ENCODE measurements at regions of chr3 and their contacts with region 1.

Region 1: GRCh38 chr3:43223670-43224364 is 62.5 kb upstream of the SNRK start:
- DNase-seq: no peak
- H3K4me3 ChIP-seq: no peak overlapping the region
- H3K4me3 Mint-ChIP-seq: no peak overlapping the region
- H3K27ac Mint-ChIP-seq: no peak overlapping the region
- H3K4me1 ChIP-seq: no peaks in the 10 kb centered on the region
- H3K4me1 Mint-ChIP-seq: no peaks in the 10 kb centered on the region
- H3K27me3 ChIP-seq: no peaks in the 10 kb centered on the region; the same call in 1 of the 2 replicates
- H3K27me3 Mint-ChIP-seq: peaks cover 2% of the 10 kb centered on the region
- CTCF ChIP-seq: no peak

Region 2: DNA sequence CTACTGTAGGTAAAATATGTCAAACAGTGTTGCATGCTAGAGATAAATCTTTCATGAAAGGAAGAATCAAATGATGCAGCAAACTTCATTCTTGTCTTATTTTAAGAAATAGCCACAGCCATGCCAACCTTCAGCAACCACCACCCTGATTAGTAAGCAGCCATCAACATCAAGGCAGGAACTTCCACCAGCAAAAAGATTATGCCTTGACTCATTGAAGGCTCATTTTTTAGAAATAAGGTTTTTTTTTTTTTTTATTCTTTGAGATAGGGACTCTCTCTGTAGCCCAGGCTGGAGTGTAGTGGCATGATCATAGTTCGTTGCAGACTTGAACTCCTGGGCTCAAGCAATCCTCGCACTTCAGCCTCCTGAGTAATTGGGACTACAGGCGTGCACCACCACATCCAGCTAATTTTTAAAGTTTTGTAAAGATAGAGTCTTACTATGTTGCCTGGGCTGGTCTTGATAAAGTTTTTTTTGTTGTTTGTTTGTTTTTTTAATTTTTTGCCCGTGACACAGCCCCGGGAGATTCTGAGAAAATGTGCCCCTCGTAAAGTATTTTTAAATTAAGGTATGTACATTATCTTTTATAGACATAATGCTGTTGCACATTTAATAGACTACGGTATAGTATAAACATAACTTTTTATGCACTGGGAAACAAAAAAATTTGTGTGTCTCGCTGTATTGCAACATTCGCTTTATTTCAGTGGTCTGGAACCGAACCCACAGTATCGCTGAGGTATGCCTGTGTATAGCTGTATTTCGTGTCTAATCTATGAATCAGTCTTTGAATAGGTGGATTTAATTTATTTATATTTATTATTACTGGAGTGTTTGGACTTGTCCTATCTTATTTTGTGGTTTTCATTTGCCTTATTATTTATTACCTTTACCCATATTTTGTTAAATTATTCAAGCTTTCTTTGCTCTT is 85.8 kb after region 1 on chr3:
- CTCF ChIA-PET with region 1: no interaction called
- POLR2A ChIA-PET with region 1: no interaction called
- intact Hi-C with region 1: no loop called
- DNase-seq: no peak
- H3K4me3 ChIP-seq: no peak overlapping the region
- H3K4me3 Mint-ChIP-seq: no peak overlapping the region
- H3K27ac Mint-ChIP-seq: no peak overlapping the region
- H3K4me1 ChIP-seq: no peaks in the 10 kb centered on the region
- H3K4me1 Mint-ChIP-seq: no peaks in the 10 kb centered on the region
- H3K27me3 ChIP-seq: no peaks in the 10 kb centered on the region
- H3K27me3 Mint-ChIP-seq: no peaks in the 10 kb centered on the region
- CTCF ChIP-seq: no peak

Region 3: DNA sequence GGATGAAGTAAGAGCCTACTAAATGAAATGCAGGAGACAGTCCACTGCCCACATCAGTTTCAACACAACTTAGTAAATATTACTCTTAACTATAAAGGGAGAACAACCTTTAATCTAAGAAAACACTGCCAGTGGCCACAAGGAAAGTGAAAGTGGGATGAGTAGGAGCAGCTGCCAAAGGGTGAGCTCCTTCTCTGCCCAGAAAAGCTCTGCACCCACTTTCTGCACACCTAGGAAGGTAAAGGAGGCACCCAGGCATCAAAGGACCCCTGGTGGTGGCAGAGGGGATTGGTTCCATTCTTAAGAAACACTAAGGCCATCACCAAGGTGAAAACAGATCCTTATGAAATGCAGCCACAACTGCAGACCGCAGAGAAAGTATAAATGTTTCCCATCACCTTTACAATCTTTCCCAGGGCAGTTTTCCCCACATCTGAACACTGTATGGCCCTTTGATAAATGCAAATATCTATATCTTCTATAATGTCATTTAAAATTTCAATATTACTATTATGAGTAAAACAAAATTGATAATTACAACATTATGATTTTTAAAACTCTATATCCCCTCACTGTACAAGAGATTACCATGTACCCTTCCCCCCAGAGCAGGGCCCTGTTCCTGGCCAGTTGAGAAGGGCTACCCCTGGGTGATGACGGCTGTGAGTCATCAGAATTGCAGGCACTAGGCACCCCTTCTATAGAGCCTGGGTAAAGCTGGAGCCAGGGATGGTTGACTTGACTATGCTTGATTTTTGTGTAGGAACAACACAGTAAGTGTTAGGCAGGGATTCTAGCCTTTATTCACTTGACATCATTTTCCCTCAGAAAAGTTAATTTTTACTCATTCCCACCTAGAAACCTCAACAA is 154.5 kb after region 1 on chr3:
- CTCF ChIA-PET with region 1: interaction called, 8 read pairs
- POLR2A ChIA-PET with region 1: no interaction called
- intact Hi-C with region 1: loop called (anchors 5 kb)
- DNase-seq: peak; percentile 55 to 61
- H3K4me3 ChIP-seq: no peak overlapping the region
- H3K4me3 Mint-ChIP-seq: no peak overlapping the region
- H3K27ac Mint-ChIP-seq: no peak overlapping the region
- H3K4me1 ChIP-seq: no peaks in the 10 kb centered on the region
- H3K4me1 Mint-ChIP-seq: no peaks in the 10 kb centered on the region
- H3K27me3 ChIP-seq: no peaks in the 10 kb centered on the region
- H3K27me3 Mint-ChIP-seq: no peaks in the 10 kb centered on the region
- CTCF ChIP-seq: peak; percentile 66 to 82

Region 4: GRCh38 chr3:43503067-43503728 is 279.4 kb after region 1 on chr3:
- CTCF ChIA-PET with region 1: interaction called, 5 read pairs
- POLR2A ChIA-PET with region 1: no interaction called
- intact Hi-C with region 1: loop called (anchors 1 kb)
- DNase-seq: no peak
- H3K4me3 ChIP-seq: no peak overlapping the region
- H3K4me3 Mint-ChIP-seq: no peak overlapping the region
- H3K27ac Mint-ChIP-seq: no peak overlapping the region
- H3K4me1 ChIP-seq: no peaks in the 10 kb centered on the region
- H3K4me1 Mint-ChIP-seq: no peaks in the 10 kb centered on the region
- H3K27me3 ChIP-seq: no peaks in the 10 kb centered on the region
- H3K27me3 Mint-ChIP-seq: no peaks in the 10 kb centered on the region
- CTCF ChIP-seq: peak in 1 of 2 experiments; percentile 49

Region 5: GRCh38 chr3:44042772-44043171 is 819.0 kb after region 1 on chr3:
- CTCF ChIA-PET with region 1: no interaction called
- POLR2A ChIA-PET with region 1: no interaction called
- intact Hi-C with region 1: loop called (anchors 5 kb)
- DNase-seq: no peak
- H3K4me3 ChIP-seq: no peak overlapping the region
- H3K4me3 Mint-ChIP-seq: no peak overlapping the region
- H3K27ac Mint-ChIP-seq: no peak overlapping the region
- H3K4me1 ChIP-seq: peaks cover 3% of the 10 kb centered on the region
- H3K4me1 Mint-ChIP-seq: peaks cover 5% of the 10 kb centered on the region
- H3K27me3 ChIP-seq: no peaks in the 10 kb centered on the region
- H3K27me3 Mint-ChIP-seq: no peaks in the 10 kb centered on the region
- CTCF ChIP-seq: no peak